ENCODE measurements at regions of chr5 and their contacts with region 1.

Region 1: DNA sequence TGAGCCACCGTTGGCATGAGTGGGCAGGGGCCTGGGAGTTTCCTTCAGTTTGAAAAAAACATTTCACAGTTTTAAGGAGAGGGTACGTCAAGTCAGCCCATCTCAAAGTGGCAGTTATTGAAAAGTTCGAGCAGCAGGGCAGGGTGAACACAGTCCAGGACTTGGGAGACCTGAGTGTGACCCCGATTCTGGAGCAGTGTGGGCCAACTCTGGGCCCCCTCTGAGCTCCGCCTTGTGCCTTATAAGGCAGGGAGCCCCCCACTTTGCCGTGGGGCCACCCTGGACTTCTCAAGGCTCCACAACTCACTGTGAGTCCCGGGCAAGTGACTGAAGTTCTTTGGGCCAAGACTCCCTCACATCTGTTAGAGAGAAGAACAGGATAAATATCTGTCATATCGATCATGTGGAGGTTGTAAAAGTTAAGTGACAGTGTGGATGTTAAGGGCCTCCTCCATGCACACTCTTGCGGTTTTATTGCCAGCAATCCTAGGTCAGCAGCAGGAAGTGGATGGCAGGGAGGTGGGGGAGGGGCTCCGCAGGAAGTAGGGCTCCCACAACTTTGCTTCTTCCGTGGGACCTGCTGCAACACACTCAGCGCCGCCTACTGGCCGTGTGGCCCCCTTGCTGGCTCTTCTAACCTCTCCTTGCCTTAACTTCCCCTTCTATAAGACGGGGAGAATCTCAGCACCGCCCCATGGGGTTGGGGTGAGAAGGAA is 38.4 kb downstream of the HRH2 start:
- DNase-seq: peak; percentile 84
- ATAC-seq: peak; percentile 79
- H3K4me3 Mint-ChIP-seq: no peak overlapping the region
- H3K27ac Mint-ChIP-seq: peak overlapping the region; percentile 51
- H3K4me1 Mint-ChIP-seq: peaks cover 28% of the 10 kb centered on the region
- H3K27me3 Mint-ChIP-seq: no peaks in the 10 kb centered on the region
- CTCF ChIP-seq: peak; percentile 68; the same call in 1 of the 2 replicates

Region 2: GRCh38 chr5:175617447-175617846 is 78.8 kb before region 1 on chr5:
- CTCF ChIA-PET with region 1: interaction called, 14 read pairs
- POLR2A ChIA-PET with region 1: no interaction called
- DNase-seq: peak; percentile 62
- ATAC-seq: peak; percentile 93
- H3K4me3 Mint-ChIP-seq: no peak overlapping the region
- H3K27ac Mint-ChIP-seq: no peak overlapping the region; the same call in 1 of the 2 replicates
- H3K4me1 Mint-ChIP-seq: peaks cover 11% of the 10 kb centered on the region
- H3K27me3 Mint-ChIP-seq: peaks cover 7% of the 10 kb centered on the region
- CTCF ChIP-seq: no peak

Region 3: GRCh38 chr5:175718401-175719108 is 22.3 kb after region 1 on chr5:
- CTCF ChIA-PET with region 1: interaction called, 21 read pairs
- POLR2A ChIA-PET with region 1: no interaction called
- DNase-seq: peak; percentile 70
- ATAC-seq: 0 out of 2 replicates have a peak, but pooled peaks have one; percentile 34
- H3K4me3 Mint-ChIP-seq: no peak overlapping the region
- H3K27ac Mint-ChIP-seq: no peak overlapping the region
- H3K4me1 Mint-ChIP-seq: peaks cover 9% of the 10 kb centered on the region
- H3K27me3 Mint-ChIP-seq: peaks cover 3% of the 10 kb centered on the region; the same call in 1 of the 2 replicates
- CTCF ChIP-seq: peak; percentile 72